PC-3 (cell line): ENCODE measurements at regions of chr5 and their contacts with region 1.

Region 1: DNA sequence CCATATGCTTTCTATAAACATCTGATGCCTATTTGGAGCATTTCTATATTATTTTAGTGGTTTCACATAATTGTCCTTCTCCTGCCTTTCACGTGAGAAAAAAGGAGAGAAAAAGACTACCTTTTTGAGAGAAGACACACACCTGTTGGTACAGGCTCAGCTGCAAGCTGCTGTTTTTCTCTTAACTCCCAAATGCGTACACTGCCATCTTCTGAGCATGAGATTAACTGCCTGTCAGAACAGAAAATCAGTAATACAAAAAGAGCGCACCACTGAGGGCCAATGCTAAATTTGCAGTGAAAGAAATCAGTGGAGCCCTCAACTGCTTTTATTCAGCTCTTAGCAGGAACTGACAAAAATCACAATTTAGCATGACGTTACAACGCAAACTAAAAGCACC is 54.9 kb downstream of the WDR41 start:
- DNase-seq: peak; percentile 12
- ATAC-seq: peak; percentile 43; the same call in 1 of the 2 replicates
- H3K4me3 ChIP-seq: no peak overlapping the region
- H3K27ac ChIP-seq: no peak overlapping the region
- H3K4me1 ChIP-seq: peaks cover 2% of the 10 kb centered on the region
- H3K27me3 ChIP-seq: no peaks in the 10 kb centered on the region
- CTCF ChIP-seq: peak; percentile 53

Region 2: DNA sequence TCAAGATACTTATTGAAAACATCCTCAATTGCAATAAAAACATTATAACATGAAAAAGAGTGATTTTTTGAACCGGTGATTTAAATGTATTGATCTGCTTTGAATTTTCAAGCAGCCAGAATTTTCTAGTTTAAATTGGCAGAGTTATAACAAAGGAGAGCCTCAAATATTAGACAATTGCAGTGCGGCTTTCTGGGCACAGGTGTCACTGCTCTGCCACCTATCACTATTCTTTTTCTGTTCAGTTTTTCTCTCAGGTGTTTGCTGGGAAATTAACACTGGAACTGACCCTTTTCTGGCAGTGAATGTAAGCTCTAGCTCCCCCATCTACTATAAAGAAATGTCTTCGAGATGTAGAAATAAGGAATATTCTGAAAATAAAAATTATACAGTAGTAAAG is 373.2 kb before region 1 on chr5:
- CTCF ChIA-PET with region 1: no interaction called
- POLR2A ChIA-PET with region 1: no interaction called
- intact Hi-C with region 1: loop called (anchors 5 kb)
- DNase-seq: no peak
- ATAC-seq: peak; percentile 27; the same call in 1 of the 2 replicates
- H3K4me3 ChIP-seq: no peak overlapping the region
- H3K27ac ChIP-seq: no peak overlapping the region
- H3K4me1 ChIP-seq: no peaks in the 10 kb centered on the region
- H3K27me3 ChIP-seq: no peaks in the 10 kb centered on the region
- CTCF ChIP-seq: peak; percentile 37; the same call in 1 of the 2 replicates

Region 3: GRCh38 chr5:77282337-77283027 is 154.7 kb before region 1 on chr5:
- CTCF ChIA-PET with region 1: no interaction called
- POLR2A ChIA-PET with region 1: no interaction called
- intact Hi-C with region 1: loop called (anchors 10 kb)
- DNase-seq: peak; percentile 75
- ATAC-seq: peak; percentile 93
- H3K4me3 ChIP-seq: no peak overlapping the region
- H3K27ac ChIP-seq: no peak overlapping the region
- H3K4me1 ChIP-seq: peaks cover 11% of the 10 kb centered on the region
- H3K27me3 ChIP-seq: no peaks in the 10 kb centered on the region
- CTCF ChIP-seq: peak; percentile 34; the same call in 1 of the 2 replicates